ENCODE measurements at regions of chr1 and their contacts with region 1.

Region 1: DNA sequence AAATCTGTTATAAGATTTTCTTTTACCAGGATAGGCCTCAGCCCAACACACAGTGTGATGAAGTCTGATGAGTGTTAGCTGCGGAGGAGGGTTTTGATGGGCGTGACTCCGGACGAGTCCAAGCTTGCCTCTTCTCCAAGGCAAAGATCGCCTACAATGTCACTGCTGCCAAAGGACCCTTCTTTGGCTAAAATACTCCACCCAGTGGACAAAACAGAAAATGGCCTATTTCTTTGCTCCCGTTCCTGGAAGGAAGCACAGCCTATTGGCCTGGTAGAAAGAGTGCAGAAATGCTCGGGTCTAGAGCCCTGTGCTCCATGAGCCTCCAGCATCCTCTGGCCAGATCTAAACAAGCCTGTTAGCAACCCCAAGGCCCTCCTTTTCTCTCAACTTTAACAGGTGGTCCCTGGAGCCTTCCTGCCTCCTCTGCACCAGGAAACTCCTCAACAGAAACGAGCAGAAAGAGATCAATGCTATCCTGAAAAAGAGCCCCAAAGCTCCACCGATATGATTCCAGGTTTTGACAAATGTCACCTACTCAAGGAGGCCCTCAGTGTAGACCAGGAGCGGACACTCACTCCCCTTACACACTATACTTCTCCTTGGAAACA is 3.4 kb upstream of the CASQ2 start:
- DNase-seq: peak in 1 of 2 donors; percentile 88
- H3K4me3 ChIP-seq: no peak overlapping the region
- H3K27ac ChIP-seq: peak overlapping the region; percentile 53
- H3K4me1 ChIP-seq: peaks cover 7% of the 10 kb centered on the region
- H3K27me3 ChIP-seq: no peaks in the 10 kb centered on the region
- CTCF ChIP-seq: peak; percentile 52 to 82 (median 74)
- POLR2A ChIP-seq: no peak

Region 2: DNA sequence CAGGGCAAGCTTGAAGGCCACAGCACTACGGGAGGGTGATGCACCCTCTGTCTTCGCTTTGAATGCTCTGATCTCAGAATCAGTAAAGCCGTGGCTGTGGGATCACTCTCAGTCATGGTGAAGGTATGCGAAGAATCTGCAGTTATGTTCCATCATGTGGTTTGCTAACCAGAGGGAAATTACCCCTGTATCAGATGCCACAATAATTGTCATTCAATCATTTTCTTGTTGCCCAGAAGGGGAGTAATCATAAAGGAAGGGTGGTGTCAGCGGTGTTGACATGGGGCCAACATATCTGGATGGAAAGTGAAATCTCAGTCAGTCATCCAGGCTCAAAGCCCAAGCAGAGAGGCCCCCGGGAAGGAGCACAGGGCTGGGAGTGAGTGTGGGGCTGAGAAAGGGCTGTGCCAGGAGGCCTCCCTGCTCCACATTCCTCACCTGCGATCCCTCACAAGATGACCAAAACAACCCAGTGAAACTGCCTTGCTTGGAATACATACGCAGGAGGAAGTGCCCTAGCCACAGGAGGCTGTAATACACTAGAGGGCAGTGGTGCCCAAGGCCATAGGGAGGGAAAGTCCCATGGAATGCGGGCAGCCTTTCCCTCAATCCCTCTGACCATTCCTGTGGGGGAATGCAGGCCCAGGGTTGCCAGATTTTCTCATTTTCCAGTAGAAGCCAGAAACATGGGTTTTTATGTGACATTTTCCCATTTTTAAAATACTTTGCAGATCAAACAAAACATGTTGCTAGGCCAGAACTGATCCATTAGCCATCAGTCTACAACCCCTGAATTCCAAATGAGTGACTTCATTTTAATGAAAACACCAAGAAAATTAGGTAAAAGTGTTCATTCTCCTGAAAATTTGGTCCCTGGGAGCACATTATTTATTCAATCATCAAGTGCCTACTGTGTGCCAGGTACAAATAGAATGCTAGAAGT is 225.9 kb before region 1 on chr1:
- intact Hi-C with region 1: loop called (anchors 10 kb)
- DNase-seq: no peak
- H3K4me3 ChIP-seq: no peak overlapping the region
- H3K27ac ChIP-seq: peak overlapping the region; percentile 46
- H3K4me1 ChIP-seq: peaks cover 13% of the 10 kb centered on the region
- H3K27me3 ChIP-seq: no peaks in the 10 kb centered on the region
- CTCF ChIP-seq: no peak
- POLR2A ChIP-seq: no peak

Region 3: GRCh38 chr1:115613767-115614166 is 158.2 kb before region 1 on chr1:
- intact Hi-C with region 1: no loop called
- DNase-seq: no peak
- H3K4me3 ChIP-seq: no peak overlapping the region
- H3K27ac ChIP-seq: no peak overlapping the region
- H3K4me1 ChIP-seq: no peaks in the 10 kb centered on the region
- H3K27me3 ChIP-seq: no peaks in the 10 kb centered on the region
- CTCF ChIP-seq: no peak
- POLR2A ChIP-seq: no peak

Region 4: GRCh38 chr1:115717541-115717940 is 54.4 kb before region 1 on chr1:
- intact Hi-C with region 1: loop called (anchors 5 kb)
- DNase-seq: no peak
- H3K4me3 ChIP-seq: no peak overlapping the region
- H3K27ac ChIP-seq: no peak overlapping the region
- H3K4me1 ChIP-seq: peaks cover 15% of the 10 kb centered on the region
- H3K27me3 ChIP-seq: no peaks in the 10 kb centered on the region
- CTCF ChIP-seq: peak; percentile 19 to 41 (median 40)
- POLR2A ChIP-seq: no peak

Measured in vagina (tissue), 2 donors.